ENCODE measurements at regions of chr18 and their contacts with region 1.

Region 1: GRCh38 chr18:74836296-74837139 is 238.8 kb downstream of the ZNF407 start:
- DNase-seq: no peak
- ATAC-seq: no peak; the same call in 1 of the 2 replicates
- H3K4me3 ChIP-seq: no peak overlapping the region
- H3K27ac ChIP-seq: no peak overlapping the region
- H3K4me1 ChIP-seq: no peaks in the 10 kb centered on the region
- H3K27me3 ChIP-seq: no peaks in the 10 kb centered on the region
- CTCF ChIP-seq: no peak

Region 2: GRCh38 chr18:74731097-74731496 is 105.4 kb before region 1 on chr18:
- CTCF ChIA-PET with region 1: no interaction called
- POLR2A ChIA-PET with region 1: no interaction called
- in situ Hi-C with region 1: loop called (anchors 5 kb)
- intact Hi-C with region 1: no loop called
- DNase-seq: no peak
- ATAC-seq: no peak
- H3K4me3 ChIP-seq: no peak overlapping the region
- H3K27ac ChIP-seq: no peak overlapping the region
- H3K4me1 ChIP-seq: no peaks in the 10 kb centered on the region
- H3K27me3 ChIP-seq: no peaks in the 10 kb centered on the region
- CTCF ChIP-seq: no peak

Region 3: DNA sequence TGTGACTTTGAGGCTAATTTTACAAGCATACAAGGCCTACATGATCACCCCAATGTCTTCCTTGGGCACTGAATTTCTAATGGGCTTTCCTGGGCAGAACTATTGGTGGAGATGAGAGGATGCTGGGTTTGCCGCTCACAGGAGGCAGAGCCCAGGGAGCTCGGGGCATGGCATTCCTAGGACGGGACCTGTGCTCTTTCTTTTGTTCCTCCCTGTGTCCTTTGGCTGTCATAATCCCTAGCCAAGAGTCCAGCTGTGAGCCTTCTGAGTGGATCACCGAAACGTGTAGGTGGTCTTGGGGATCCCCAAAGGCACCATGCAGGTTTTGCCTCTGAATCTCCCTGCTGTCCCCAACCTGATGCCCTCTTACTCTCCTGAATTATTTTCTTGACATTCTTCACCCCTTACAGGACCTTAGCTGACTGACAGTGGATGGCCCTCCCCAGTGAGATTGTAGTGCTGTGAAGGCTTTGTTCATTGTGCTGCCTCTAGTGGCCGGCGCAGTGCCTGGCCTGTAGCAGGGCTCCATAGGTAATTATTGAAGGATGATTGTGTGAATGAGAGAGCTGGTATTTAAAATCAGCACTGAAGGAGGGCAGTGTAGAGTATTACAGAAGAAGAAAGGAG is 17.0 kb before region 1 on chr18:
- CTCF ChIA-PET with region 1: no interaction called
- POLR2A ChIA-PET with region 1: no interaction called
- in situ Hi-C with region 1: no loop called
- intact Hi-C with region 1: no loop called
- DNase-seq: no peak
- ATAC-seq: peak; percentile 97
- H3K4me3 ChIP-seq: no peak overlapping the region
- H3K27ac ChIP-seq: no peak overlapping the region
- H3K4me1 ChIP-seq: no peaks in the 10 kb centered on the region
- H3K27me3 ChIP-seq: no peaks in the 10 kb centered on the region
- CTCF ChIP-seq: peak; percentile 87

Region 4: GRCh38 chr18:75130591-75131328 is 294.2 kb after region 1 on chr18:
- CTCF ChIA-PET with region 1: no interaction called
- POLR2A ChIA-PET with region 1: no interaction called
- in situ Hi-C with region 1: no loop called
- intact Hi-C with region 1: no loop called
- DNase-seq: no peak
- ATAC-seq: no peak
- H3K4me3 ChIP-seq: no peak overlapping the region
- H3K27ac ChIP-seq: no peak overlapping the region
- H3K4me1 ChIP-seq: no peaks in the 10 kb centered on the region
- H3K27me3 ChIP-seq: no peaks in the 10 kb centered on the region; the same call in 1 of the 2 replicates
- CTCF ChIP-seq: no peak